Caco-2 (cell line): ENCODE measurements at regions of chr19 and their contacts with region 1.

Region 1: GRCh38 chr19:47436712-47437401 is 17.5 kb upstream of the MEIS3 start:
- DNase-seq: peak; percentile 79 to 88
- H3K4me3 ChIP-seq: no peak overlapping the region
- H3K4me3 Mint-ChIP-seq: no peak overlapping the region
- H3K27ac Mint-ChIP-seq: no peak overlapping the region
- H3K4me1 ChIP-seq: no peaks in the 10 kb centered on the region
- H3K4me1 Mint-ChIP-seq: no peaks in the 10 kb centered on the region
- H3K27me3 ChIP-seq: no peaks in the 10 kb centered on the region; the same call in 1 of the 2 replicates
- H3K27me3 Mint-ChIP-seq: peaks cover 6% of the 10 kb centered on the region
- CTCF ChIP-seq: peak; percentile 93 to 96

Region 2: GRCh38 chr19:47406711-47407416 is 30.0 kb before region 1 on chr19:
- CTCF ChIA-PET with region 1: no interaction called
- POLR2A ChIA-PET with region 1: no interaction called
- intact Hi-C with region 1: no loop called
- DNase-seq: peak in 1 of 2 experiments; percentile 79
- H3K4me3 ChIP-seq: no peak overlapping the region
- H3K4me3 Mint-ChIP-seq: no peak overlapping the region
- H3K27ac Mint-ChIP-seq: no peak overlapping the region
- H3K4me1 ChIP-seq: 0 out of 2 replicates have a peak, but pooled peaks cover 4% of the 10 kb centered on the region
- H3K4me1 Mint-ChIP-seq: no peaks in the 10 kb centered on the region
- H3K27me3 ChIP-seq: no peaks in the 10 kb centered on the region
- H3K27me3 Mint-ChIP-seq: peaks cover 27% of the 10 kb centered on the region
- CTCF ChIP-seq: no peak

Region 3: DNA sequence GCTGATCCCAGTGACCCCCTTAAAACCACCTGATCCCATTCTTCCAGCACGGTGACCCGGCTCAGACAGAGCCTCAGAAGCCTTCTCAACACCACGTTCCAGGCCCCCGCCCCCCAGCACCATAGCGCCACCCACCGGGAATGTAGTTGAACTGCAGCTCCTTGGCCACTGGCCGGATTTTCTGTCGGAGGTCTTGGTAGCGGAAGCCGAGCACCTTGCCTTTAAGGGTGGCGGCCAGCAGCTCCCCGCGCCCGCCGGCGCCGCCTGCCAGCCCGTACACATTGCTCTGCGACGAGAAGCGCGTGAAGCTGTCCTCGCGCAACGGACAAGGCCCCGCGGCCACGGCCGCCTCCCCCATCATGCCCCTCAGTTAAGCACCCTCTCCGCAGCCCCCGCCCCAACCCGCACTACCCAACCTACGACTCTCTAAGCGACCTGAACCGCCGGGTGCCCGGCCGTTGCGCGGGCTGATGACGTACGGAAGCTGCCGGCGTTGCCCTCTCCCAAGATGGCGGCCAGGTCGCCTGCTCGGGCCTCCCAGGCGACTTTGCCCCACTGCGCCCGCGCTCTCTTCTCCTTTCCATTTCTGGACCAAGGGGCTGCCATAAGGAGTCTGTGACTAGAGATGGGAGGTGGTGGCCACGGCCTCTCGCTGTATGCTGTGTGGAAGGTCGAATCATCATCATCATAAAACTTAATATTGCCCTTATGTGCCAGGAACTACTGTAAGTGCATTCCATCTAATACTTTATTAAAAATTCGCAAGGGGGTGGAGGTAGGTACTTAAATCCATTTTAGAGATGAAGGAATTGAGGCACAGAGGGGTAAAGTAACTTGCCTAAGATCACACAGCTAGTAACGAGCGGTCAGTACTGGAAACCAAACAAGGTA is 47.2 kb after region 1 on chr19 and contains the start of gene KPTN:
- CTCF ChIA-PET with region 1: interaction called, 41 read pairs
- POLR2A ChIA-PET with region 1: no interaction called
- intact Hi-C with region 1: loop called (anchors 1 kb)
- DNase-seq: peak; percentile 94 to 95
- H3K4me3 ChIP-seq: peak within 1 kb of the TSS; percentile 95
- H3K4me3 Mint-ChIP-seq: peak within 1 kb of the TSS; percentile 91
- H3K27ac Mint-ChIP-seq: peak within 1 kb of the TSS; percentile 99
- H3K4me1 ChIP-seq: no peaks in the 10 kb centered on the region
- H3K4me1 Mint-ChIP-seq: no peaks in the 10 kb centered on the region
- H3K27me3 ChIP-seq: no peaks in the 10 kb centered on the region
- H3K27me3 Mint-ChIP-seq: no peaks in the 10 kb centered on the region
- CTCF ChIP-seq: peak; percentile 97 to 98
- total RNA-seq, gene KPTN: 19.7 and 20.6 TPM in 2 replicates

Region 4: GRCh38 chr19:47600246-47601179 is 163.7 kb after region 1 on chr19:
- CTCF ChIA-PET with region 1: interaction called, 8 read pairs
- POLR2A ChIA-PET with region 1: no interaction called
- intact Hi-C with region 1: loop called (anchors 5 kb)
- DNase-seq: peak; percentile 100
- H3K4me3 ChIP-seq: peak overlapping the region; percentile 46
- H3K4me3 Mint-ChIP-seq: peak overlapping the region; percentile 77
- H3K27ac Mint-ChIP-seq: peak overlapping the region; percentile 87
- H3K4me1 ChIP-seq: peaks cover 24% of the 10 kb centered on the region
- H3K4me1 Mint-ChIP-seq: peaks cover 21% of the 10 kb centered on the region
- H3K27me3 ChIP-seq: no peaks in the 10 kb centered on the region
- H3K27me3 Mint-ChIP-seq: no peaks in the 10 kb centered on the region
- CTCF ChIP-seq: no peak

Region 5: GRCh38 chr19:47663841-47664771 is 227.2 kb after region 1 on chr19:
- CTCF ChIA-PET with region 1: interaction called, 11 read pairs
- POLR2A ChIA-PET with region 1: no interaction called
- intact Hi-C with region 1: no loop called
- DNase-seq: peak; percentile 73
- H3K4me3 ChIP-seq: no peak overlapping the region
- H3K4me3 Mint-ChIP-seq: peak overlapping the region; percentile 53
- H3K27ac Mint-ChIP-seq: peak overlapping the region; percentile 94
- H3K4me1 ChIP-seq: peaks cover 94% of the 10 kb centered on the region
- H3K4me1 Mint-ChIP-seq: peaks cover 65% of the 10 kb centered on the region
- H3K27me3 ChIP-seq: no peaks in the 10 kb centered on the region
- H3K27me3 Mint-ChIP-seq: no peaks in the 10 kb centered on the region
- CTCF ChIP-seq: no peak

Region 6: DNA sequence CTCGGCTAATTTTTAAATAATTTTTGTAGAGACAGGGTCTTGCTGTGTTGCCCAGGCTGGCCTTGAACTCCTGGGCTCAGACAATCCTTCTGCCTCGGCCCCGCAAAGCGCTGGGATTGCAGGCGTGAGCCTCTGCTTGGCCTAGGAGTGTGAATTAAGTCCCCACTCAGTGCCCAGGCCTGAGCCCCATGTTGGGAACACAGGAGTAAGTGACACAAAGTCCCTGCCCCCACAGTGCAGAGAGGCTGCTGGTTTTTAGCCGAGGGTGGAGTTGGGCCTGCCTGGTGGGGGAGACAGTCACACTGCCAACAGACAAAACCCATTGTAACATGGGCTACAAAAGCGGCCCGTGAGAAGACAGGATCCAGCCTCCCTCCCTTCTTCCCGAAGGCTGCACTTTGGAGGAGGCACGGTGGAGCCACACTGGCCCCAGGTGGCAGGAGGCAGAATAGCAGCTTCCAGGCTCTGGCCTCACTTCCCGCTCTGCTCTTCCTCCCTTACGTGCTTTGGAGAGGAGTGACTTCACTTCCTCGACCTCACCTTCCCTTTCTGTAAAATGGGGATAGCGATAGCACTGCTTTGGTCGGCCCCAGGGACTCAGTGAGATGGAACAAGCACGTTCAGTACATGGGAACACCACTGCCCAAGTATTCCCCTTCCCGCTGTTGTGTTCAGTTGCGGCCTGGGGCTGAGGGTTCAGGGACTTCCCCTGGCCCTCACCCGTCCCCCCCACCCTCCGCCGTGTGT is 261.2 kb after region 1 on chr19:
- CTCF ChIA-PET with region 1: interaction called, 18 read pairs
- POLR2A ChIA-PET with region 1: no interaction called
- intact Hi-C with region 1: loop called (anchors 2 kb)
- DNase-seq: peak; percentile 84 to 87
- H3K4me3 ChIP-seq: no peak overlapping the region
- H3K4me3 Mint-ChIP-seq: no peak overlapping the region
- H3K27ac Mint-ChIP-seq: peak overlapping the region; percentile 56
- H3K4me1 ChIP-seq: peaks cover 6% of the 10 kb centered on the region
- H3K4me1 Mint-ChIP-seq: no peaks in the 10 kb centered on the region
- H3K27me3 ChIP-seq: no peaks in the 10 kb centered on the region
- H3K27me3 Mint-ChIP-seq: no peaks in the 10 kb centered on the region
- CTCF ChIP-seq: peak; percentile 99

Region 7: DNA sequence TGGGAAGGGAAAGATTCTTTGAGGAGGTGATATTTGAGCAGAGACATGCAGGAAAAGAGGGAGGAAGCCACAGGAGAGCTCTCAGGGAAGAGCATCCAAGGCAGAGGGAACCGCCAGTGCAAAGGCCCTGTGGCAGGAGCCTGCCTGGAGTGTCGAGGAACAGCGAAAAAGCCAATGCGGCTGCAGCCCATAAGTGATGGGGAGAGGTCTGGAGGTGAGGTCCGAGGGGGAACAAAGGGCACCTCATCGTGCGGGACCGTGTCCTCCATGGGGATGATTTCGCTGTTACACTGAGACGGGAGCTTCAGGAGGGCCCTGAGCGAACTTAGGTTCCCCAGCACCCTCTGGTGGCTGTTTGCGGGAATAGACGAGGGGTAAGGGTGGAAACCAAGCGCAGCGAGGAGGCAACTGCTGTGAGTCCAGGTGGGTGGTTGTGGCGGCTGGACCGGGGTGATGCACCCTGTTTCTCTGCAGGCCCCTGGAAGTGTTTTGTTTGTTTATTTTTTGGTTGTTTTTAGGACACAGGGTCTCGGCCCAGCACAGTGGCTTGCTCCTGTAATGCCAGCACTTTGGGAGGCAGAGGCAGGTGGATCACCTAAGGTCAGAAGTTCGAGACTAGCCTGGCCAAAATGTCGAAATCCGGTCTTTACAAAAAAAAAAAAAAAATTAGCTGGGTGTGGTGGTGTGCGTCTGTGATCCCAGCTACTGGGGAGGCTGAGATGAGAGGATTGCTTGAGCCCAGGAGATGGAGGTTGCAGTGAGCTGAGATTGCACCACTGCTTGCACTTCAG is 270.5 kb after region 1 on chr19:
- CTCF ChIA-PET with region 1: interaction called, 82 read pairs
- POLR2A ChIA-PET with region 1: no interaction called
- intact Hi-C with region 1: loop called (anchors 1 kb)
- DNase-seq: peak; percentile 84 to 87
- H3K4me3 ChIP-seq: no peak overlapping the region
- H3K4me3 Mint-ChIP-seq: no peak overlapping the region
- H3K27ac Mint-ChIP-seq: peak overlapping the region; percentile 11
- H3K4me1 ChIP-seq: 0 out of 2 replicates have a peak, but pooled peaks cover 4% of the 10 kb centered on the region
- H3K4me1 Mint-ChIP-seq: peaks cover 10% of the 10 kb centered on the region
- H3K27me3 ChIP-seq: no peaks in the 10 kb centered on the region
- H3K27me3 Mint-ChIP-seq: no peaks in the 10 kb centered on the region
- CTCF ChIP-seq: peak; percentile 85 to 91

Region 8: GRCh38 chr19:47713046-47714021 is 276.5 kb after region 1 on chr19 and contains the start of gene EHD2:
- CTCF ChIA-PET with region 1: interaction called, 82 read pairs
- POLR2A ChIA-PET with region 1: no interaction called
- intact Hi-C with region 1: no loop called
- DNase-seq: peak in 1 of 2 experiments; percentile 74
- H3K4me3 ChIP-seq: peak within 1 kb of the TSS; percentile 33
- H3K4me3 Mint-ChIP-seq: peak within 1 kb of the TSS; percentile 77
- H3K27ac Mint-ChIP-seq: peak within 1 kb of the TSS; percentile 12
- H3K4me1 ChIP-seq: 0 out of 2 replicates have a peak, but pooled peaks cover 4% of the 10 kb centered on the region
- H3K4me1 Mint-ChIP-seq: peaks cover 10% of the 10 kb centered on the region
- H3K27me3 ChIP-seq: no peaks in the 10 kb centered on the region
- H3K27me3 Mint-ChIP-seq: no peaks in the 10 kb centered on the region
- CTCF ChIP-seq: peak; percentile 90 to 98
- total RNA-seq, gene EHD2: 13.3 and 14.6 TPM in 2 replicates